Sigmoid colon (tissue), 7 donors: ENCODE measurements at regions of chr4 and their contacts with region 1.

Region 1: DNA sequence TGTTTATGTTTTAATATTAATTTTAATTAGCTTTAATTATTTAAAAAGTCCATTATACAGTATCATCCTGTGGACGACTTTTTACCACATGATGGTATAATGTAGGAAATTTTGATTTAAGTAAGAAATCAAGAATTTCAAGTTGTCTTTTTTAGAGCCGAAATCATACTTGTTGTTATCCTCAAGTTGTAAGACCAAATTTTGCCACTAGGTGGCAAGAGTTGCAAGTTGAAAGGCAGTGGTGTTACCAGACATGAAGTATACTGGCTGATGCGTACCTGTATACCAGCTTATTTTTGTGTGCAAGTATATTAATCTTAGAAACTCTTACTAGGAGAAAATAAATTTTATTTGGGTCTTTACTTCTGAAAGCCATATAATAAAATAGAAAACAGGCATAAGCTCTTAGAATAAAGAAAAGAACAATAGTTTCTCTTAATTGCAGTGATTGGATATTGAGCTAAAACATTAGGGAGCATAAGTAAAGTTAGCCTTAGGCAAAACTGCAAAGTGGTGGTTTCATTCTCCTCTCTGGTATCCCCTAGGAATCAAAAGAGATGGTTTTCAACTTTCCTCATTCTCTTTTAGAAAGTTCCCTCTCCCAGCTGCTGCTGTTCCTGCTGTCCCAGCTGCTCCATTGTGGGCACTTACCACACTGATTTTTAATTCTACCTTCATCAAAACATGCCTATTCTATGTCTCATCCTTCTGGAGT is 118.0 kb upstream of the WDFY3 start:
- DNase-seq: no peak
- H3K4me3 ChIP-seq: no peak overlapping the region
- H3K27ac ChIP-seq: no peak overlapping the region
- H3K4me1 ChIP-seq: no peaks in the 10 kb centered on the region
- H3K27me3 ChIP-seq: no peaks in the 10 kb centered on the region
- CTCF ChIP-seq: peak in 3 of 4 experiments; percentile 11 to 68 (median 38)
- EP300 ChIP-seq: no peak
- POLR2A ChIP-seq: no peak

Region 2: GRCh38 chr4:85747882-85748491 is 663.5 kb after region 1 on chr4:
- intact Hi-C with region 1: loop called (anchors 5 kb)
- DNase-seq: no peak
- H3K4me3 ChIP-seq: no peak overlapping the region
- H3K27ac ChIP-seq: no peak overlapping the region
- H3K4me1 ChIP-seq: no peaks in the 10 kb centered on the region
- H3K27me3 ChIP-seq: no peaks in the 10 kb centered on the region
- CTCF ChIP-seq: peak; percentile 10 to 82 (median 64)
- EP300 ChIP-seq: no peak
- POLR2A ChIP-seq: no peak

Region 3: DNA sequence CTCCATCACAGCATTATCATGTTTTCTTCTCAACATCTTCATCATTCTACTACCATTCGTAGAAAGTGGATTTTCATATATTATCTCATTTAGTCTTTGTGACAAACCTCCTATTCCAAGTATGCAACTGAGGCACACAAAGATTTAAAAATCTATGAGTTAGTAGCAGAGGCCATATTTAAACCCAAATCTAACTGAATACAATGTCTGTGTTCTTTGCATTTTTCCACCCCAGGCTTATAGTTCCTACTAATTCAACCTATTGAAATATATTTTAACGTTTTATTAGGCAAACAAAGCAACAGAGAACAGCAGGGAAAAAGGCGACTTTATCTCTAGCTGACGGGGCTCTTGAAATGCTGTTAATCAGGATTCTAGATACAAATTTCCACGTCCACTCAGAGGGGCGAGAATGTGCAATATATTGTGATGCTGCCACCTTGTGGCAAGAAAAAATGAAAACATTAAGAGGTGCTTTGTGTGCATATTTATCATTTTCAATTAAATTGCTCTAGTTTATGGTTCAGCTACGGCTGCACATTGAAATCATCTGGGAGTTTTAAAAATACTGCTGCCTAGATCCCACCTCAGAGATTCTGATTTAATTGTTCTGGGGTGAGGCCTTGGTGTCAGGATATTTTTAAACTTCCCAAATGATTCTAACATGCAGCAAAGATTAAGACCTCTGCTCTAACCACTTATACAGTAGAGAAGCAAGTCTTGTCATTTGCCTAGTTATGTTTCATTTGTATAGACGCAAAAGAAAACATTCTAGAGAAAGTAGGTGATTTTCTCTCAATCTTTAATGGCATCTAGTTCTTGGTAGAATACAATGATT is 959.4 kb after region 1 on chr4:
- intact Hi-C with region 1: loop called (anchors 2 kb)
- DNase-seq: no peak
- H3K4me3 ChIP-seq: no peak overlapping the region
- H3K27ac ChIP-seq: no peak overlapping the region
- H3K4me1 ChIP-seq: peaks cover 0 to 4% (median 0%) of the 10 kb centered on the region in 4 donors
- H3K27me3 ChIP-seq: no peaks in the 10 kb centered on the region
- CTCF ChIP-seq: peak in 3 of 4 experiments; percentile 23 to 58 (median 36)
- EP300 ChIP-seq: no peak
- POLR2A ChIP-seq: no peak